ENCODE measurements at regions of chr3 and their contacts with region 1.

Region 1: GRCh38 chr3:52490939-52491526 is 4.1 kb upstream of the STAB1 start:
- DNase-seq: no peak
- ATAC-seq: no peak
- H3K4me3 Mint-ChIP-seq: no peak overlapping the region
- H3K27ac Mint-ChIP-seq: no peak overlapping the region
- H3K4me1 Mint-ChIP-seq: no peaks in the 10 kb centered on the region
- H3K27me3 Mint-ChIP-seq: no peaks in the 10 kb centered on the region
- CTCF ChIP-seq: no peak

Region 2: GRCh38 chr3:52471371-52472238 is 19.4 kb before region 1 on chr3:
- CTCF ChIA-PET with region 1: interaction called, 10 read pairs
- POLR2A ChIA-PET with region 1: no interaction called
- DNase-seq: peak; percentile 64
- ATAC-seq: peak; percentile 90
- H3K4me3 Mint-ChIP-seq: no peak overlapping the region
- H3K27ac Mint-ChIP-seq: 0 out of 2 replicates have a peak overlapping the region, but pooled peaks have one; percentile 23
- H3K4me1 Mint-ChIP-seq: no peaks in the 10 kb centered on the region
- H3K27me3 Mint-ChIP-seq: no peaks in the 10 kb centered on the region
- CTCF ChIP-seq: peak; percentile 70

Region 3: GRCh38 chr3:52524193-52524751 is 33.2 kb after region 1 on chr3:
- CTCF ChIA-PET with region 1: no interaction called
- POLR2A ChIA-PET with region 1: no interaction called
- DNase-seq: no peak
- ATAC-seq: no peak
- H3K4me3 Mint-ChIP-seq: no peak overlapping the region
- H3K27ac Mint-ChIP-seq: peak overlapping the region; percentile 38; the same call in 1 of the 2 replicates
- H3K4me1 Mint-ChIP-seq: 0 out of 2 replicates have a peak, but pooled peaks cover under 1% of the 10 kb centered on the region
- H3K27me3 Mint-ChIP-seq: no peaks in the 10 kb centered on the region; the same call in 1 of the 2 replicates
- CTCF ChIP-seq: no peak

Measured in WTC11 (cell line).